HepG2 (cell line): ENCODE measurements at regions of chr2 and their contacts with region 1.

Region 1: GRCh38 chr2:170973492-170974303 is 44.6 kb downstream of the GORASP2 start:
- DNase-seq: peak; percentile 83
- ATAC-seq: peak; percentile 76
- H3K4me3 ChIP-seq: peak overlapping the region; percentile 62 to 83 (median 64)
- H3K27ac ChIP-seq: peak overlapping the region; percentile 92
- H3K4me1 ChIP-seq: peaks cover 58% of the 10 kb centered on the region
- H3K27me3 ChIP-seq: no peaks in the 10 kb centered on the region
- CTCF ChIP-seq: peak; percentile 92
- EP300 ChIP-seq: peak; percentile 37 to 70; a peak in 3 of 4 replicates
- POLR2A ChIP-seq: peak; percentile 61
- RAD21 ChIP-seq: peak; percentile 100

Region 2: DNA sequence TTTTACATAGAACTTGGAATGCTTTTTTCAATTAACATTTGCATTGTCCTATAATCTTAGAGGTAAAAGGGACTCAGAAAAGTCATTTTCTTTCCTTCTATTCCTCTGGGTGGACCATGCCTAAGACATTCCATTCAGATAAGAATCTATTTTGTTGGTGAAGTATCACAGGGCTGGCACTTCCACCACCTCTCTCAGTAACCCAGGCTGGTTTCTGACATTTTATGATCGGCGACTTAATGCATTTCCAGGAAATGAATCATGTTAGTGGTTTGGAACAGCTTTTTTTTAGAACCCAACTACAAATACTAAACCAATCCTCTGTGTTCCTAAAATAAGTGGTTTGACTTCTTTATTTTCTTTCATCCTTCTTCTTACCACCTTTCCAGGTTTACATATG is 130.0 kb before region 1 on chr2:
- CTCF ChIA-PET with region 1: no interaction called
- POLR2A ChIA-PET with region 1: no interaction called
- in situ Hi-C with region 1: no loop called
- intact Hi-C with region 1: no loop called
- DNase-seq: no peak
- ATAC-seq: no peak
- H3K4me3 ChIP-seq: no peak overlapping the region
- H3K27ac ChIP-seq: no peak overlapping the region
- H3K4me1 ChIP-seq: no peaks in the 10 kb centered on the region
- H3K27me3 ChIP-seq: no peaks in the 10 kb centered on the region
- CTCF ChIP-seq: no peak
- EP300 ChIP-seq: no peak
- POLR2A ChIP-seq: no peak
- RAD21 ChIP-seq: no peak

Region 3: GRCh38 chr2:170984079-170984478 is 10.4 kb after region 1 on chr2:
- CTCF ChIA-PET with region 1: no interaction called
- POLR2A ChIA-PET with region 1: interaction called, 13 read pairs
- in situ Hi-C with region 1: no loop called
- intact Hi-C with region 1: no loop called
- DNase-seq: no peak
- ATAC-seq: peak; percentile 30
- H3K4me3 ChIP-seq: no peak overlapping the region
- H3K27ac ChIP-seq: no peak overlapping the region
- H3K4me1 ChIP-seq: peaks cover 9% of the 10 kb centered on the region; the same call in 1 of the 2 replicates
- H3K27me3 ChIP-seq: no peaks in the 10 kb centered on the region; a peak in 1 of 5 replicates
- CTCF ChIP-seq: no peak
- EP300 ChIP-seq: no peak
- POLR2A ChIP-seq: no peak
- RAD21 ChIP-seq: no peak

Region 4: GRCh38 chr2:171160119-171160955 is 186.6 kb after region 1 on chr2 and contains the start of gene TLK1:
- CTCF ChIA-PET with region 1: interaction called, 4 read pairs
- POLR2A ChIA-PET with region 1: interaction called, 7 read pairs
- in situ Hi-C with region 1: loop called (anchors 5 kb)
- intact Hi-C with region 1: loop called (anchors 1 kb)
- DNase-seq: peak; percentile 62
- ATAC-seq: peak; percentile 81
- H3K4me3 ChIP-seq: peak within 1 kb of the TSS; percentile 73 to 99 (median 90)
- H3K27ac ChIP-seq: peak within 1 kb of the TSS; percentile 96
- H3K4me1 ChIP-seq: peaks cover 52% of the 10 kb centered on the region
- H3K27me3 ChIP-seq: no peaks in the 10 kb centered on the region; a peak in 1 of 5 replicates
- CTCF ChIP-seq: peak; percentile 15; the same call in 1 of the 2 replicates
- EP300 ChIP-seq: no peak
- POLR2A ChIP-seq: peak; percentile 49 to 72; a peak in 3 of 4 replicates
- RAD21 ChIP-seq: peak; percentile 80
- total RNA-seq, gene TLK1: 28.7 and 52.7 TPM in 2 replicates

Region 5: DNA sequence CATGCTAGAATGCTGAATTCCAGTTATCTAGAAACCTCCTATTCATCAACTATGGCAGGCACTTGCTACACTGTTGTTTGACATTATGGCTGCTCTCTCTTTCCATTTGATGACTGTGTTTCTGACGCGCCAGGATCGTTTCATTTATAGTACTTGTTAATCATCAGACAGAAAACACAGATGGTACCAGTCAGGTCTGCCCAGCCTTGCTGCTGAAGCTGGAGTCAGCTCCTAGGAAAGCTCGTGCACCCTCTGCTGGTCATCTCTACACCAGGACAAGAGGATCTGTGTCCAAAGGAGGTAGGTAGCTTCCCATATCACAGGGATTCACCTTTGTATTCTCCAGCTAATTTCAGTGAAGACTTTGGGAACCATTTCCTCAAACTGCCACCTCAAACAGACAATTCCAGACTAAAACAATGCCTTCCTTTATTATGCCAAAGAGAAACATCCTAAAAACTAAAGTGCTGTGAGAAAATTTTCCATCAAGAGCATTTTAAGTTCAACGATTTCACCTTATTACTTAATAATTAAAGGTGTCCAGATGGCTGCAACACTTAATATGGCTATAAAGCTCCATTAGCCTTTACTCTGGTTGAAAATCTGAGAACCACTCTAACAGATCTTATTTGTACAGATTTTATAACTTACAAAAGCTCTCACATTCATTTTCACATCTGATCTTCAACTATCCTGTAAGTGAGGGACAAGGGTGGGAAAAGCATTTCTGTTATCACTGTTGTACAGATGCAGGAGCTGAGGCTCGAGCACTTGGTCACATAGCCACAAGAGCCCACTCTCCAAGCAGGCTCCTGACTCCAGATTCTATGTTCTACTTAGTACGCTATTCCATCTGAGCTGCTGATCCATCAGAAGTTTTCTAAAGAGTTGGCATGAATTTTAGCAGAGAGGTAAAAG is 442.6 kb after region 1 on chr2:
- CTCF ChIA-PET with region 1: interaction called, 15 read pairs
- POLR2A ChIA-PET with region 1: interaction called, 21 read pairs
- in situ Hi-C with region 1: loop called (anchors 5 kb)
- intact Hi-C with region 1: loop called (anchors 1 kb)
- DNase-seq: peak; percentile 87
- ATAC-seq: peak; percentile 100
- H3K4me3 ChIP-seq: no peak overlapping the region
- H3K27ac ChIP-seq: no peak overlapping the region
- H3K4me1 ChIP-seq: peaks cover 9% of the 10 kb centered on the region
- H3K27me3 ChIP-seq: no peaks in the 10 kb centered on the region
- CTCF ChIP-seq: peak; percentile 97
- EP300 ChIP-seq: no peak
- POLR2A ChIP-seq: no peak
- RAD21 ChIP-seq: peak; percentile 95